A673 (cell line): ENCODE measurements at regions of chr6 and their contacts with region 1.

Region 1: DNA sequence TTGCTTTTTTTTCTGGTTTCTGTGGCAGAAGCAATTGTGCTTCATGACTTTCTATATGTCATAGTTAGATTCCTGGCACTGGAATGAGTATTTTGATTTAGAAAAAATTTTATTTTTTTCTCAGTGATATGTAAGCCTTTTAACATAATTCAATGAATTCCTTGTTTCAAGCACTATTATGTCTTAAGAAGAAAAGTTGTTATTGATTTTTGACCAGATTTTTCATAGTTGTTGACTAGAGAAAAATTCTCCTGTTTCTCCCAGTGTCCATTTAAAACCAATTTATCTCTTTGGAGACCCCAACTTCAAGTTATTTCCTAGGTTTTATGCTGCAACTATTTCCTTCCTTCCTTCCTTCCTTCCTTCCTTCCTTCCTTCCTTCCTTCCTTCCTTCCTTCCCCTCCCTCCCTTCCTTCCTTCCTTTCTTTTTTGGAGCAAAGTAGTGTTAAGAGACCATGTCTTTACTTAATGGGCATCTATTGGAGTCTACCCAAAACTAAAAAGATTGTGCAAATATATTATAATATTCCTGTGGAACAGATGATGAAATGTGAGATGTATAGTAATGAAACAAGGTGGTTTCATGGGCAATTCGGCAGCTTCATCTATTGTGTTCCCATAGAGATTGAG is 346.9 kb downstream of the RNF144B start:
- DNase-seq: peak; percentile 97
- H3K4me3 ChIP-seq: no peak overlapping the region
- H3K27ac ChIP-seq: peak overlapping the region; percentile 97
- H3K4me1 ChIP-seq: peaks cover 41% of the 10 kb centered on the region
- H3K27me3 ChIP-seq: no peaks in the 10 kb centered on the region
- CTCF ChIP-seq: no peak

Region 2: DNA sequence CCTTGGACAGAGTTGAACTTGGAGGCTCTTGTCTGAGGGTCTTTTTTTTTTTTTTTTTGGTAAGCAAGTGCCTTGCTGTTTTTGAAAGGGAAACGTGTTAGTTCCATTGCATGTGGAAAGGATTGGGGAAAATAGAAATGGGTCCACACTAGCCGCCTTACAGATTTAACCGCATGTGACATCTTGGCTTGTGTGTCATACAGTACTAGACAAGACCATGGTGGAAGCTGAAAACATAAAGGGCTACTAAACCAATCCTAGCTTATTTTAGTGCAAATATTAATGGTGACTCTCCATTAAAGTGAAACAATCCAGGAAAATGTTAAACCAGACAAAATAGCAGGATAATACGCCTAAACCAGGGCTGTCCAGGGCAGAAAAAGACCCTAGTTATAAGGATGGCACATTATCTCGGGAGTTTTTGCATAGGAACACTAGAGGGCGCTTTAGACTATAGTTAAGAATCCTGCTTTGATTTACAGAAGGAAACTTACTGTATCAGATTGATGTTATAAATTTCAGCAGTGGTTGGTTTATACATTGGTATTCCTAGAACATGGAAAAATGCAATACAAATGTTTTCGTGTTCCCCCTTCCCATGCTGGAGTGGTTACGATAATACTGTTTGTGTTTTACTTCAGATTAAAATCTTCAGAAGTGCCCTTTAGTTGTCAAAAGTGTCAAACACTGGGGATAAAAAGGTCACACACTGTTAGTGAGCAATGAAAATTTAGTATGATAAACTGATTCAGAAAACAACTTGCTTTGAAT is 409.9 kb before region 1 on chr6:
- CTCF ChIA-PET with region 1: interaction called, 3 read pairs
- POLR2A ChIA-PET with region 1: no interaction called
- intact Hi-C with region 1: loop called (anchors 10 kb)
- DNase-seq: peak; percentile 77
- H3K4me3 ChIP-seq: no peak overlapping the region
- H3K27ac ChIP-seq: no peak overlapping the region
- H3K4me1 ChIP-seq: peaks cover 8% of the 10 kb centered on the region
- H3K27me3 ChIP-seq: no peaks in the 10 kb centered on the region
- CTCF ChIP-seq: peak; percentile 81

Region 3: DNA sequence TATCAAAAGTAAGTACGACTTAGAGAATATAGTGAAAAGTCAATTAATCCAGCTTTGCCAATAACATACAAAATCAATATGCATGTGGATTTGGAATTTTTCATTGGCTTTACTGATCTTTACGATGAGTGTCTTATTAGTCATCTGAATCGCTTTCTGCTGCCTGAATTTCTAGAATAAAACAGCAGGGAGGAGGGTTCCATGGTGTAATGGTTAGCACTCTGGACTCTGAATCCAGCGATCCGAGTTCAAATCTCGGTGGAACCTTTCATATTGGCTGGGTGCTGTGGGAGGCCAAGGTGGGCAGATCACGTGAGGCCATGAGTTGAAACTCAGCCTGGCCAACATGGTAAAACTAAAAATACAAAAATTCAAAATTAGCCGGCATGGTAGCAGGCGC is 101.9 kb after region 1 on chr6:
- CTCF ChIA-PET with region 1: no interaction called
- POLR2A ChIA-PET with region 1: no interaction called
- intact Hi-C with region 1: no loop called
- DNase-seq: no peak
- H3K4me3 ChIP-seq: no peak overlapping the region
- H3K27ac ChIP-seq: no peak overlapping the region
- H3K4me1 ChIP-seq: no peaks in the 10 kb centered on the region
- H3K27me3 ChIP-seq: no peaks in the 10 kb centered on the region
- CTCF ChIP-seq: no peak

Region 4: DNA sequence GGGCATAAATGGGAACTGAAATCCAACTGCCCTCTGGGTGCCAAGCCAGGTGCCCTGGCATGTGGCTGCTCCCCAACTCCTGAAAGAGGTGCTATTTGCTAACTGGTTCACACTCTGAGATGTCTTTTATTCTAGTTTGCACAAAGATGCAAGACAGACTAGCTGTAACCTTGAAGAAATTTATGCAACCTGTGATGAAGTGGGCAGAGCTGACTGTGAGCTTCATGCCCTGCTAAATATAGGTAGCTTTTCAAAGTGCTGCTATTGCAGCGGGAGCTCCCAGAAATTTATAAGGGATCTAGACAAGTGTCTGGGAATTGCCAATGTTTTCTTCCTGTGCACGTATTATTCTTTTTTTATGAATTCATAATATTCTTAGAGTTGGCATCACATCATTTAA is 170.6 kb after region 1 on chr6:
- CTCF ChIA-PET with region 1: no interaction called
- POLR2A ChIA-PET with region 1: no interaction called
- intact Hi-C with region 1: no loop called
- DNase-seq: no peak
- H3K4me3 ChIP-seq: no peak overlapping the region
- H3K27ac ChIP-seq: no peak overlapping the region
- H3K4me1 ChIP-seq: no peaks in the 10 kb centered on the region
- H3K27me3 ChIP-seq: no peaks in the 10 kb centered on the region
- CTCF ChIP-seq: no peak

Region 5: DNA sequence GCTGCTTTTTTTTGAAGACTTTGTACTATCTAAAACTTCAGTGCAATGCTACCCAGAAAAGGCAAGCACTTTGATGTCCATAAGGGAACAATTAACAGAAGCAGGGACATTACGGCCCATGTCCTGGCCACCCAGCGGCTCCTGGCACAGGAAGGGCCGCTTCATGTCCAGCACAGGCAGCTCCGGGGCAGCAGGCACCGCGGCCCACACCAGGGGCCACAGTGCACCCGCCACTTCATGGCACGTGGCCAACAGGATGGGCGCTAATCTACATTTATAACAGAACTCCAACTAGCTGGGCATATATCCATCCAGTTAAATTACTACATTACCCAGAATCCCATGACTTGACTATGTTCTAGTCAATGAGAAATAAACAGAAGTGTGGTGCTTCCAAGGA is 904.9 kb after region 1 on chr6:
- CTCF ChIA-PET with region 1: no interaction called
- POLR2A ChIA-PET with region 1: no interaction called
- intact Hi-C with region 1: loop called (anchors 5 kb)
- DNase-seq: no peak
- H3K4me3 ChIP-seq: no peak overlapping the region
- H3K27ac ChIP-seq: no peak overlapping the region
- H3K4me1 ChIP-seq: peaks cover 34% of the 10 kb centered on the region
- H3K27me3 ChIP-seq: no peaks in the 10 kb centered on the region
- CTCF ChIP-seq: no peak

Region 6: DNA sequence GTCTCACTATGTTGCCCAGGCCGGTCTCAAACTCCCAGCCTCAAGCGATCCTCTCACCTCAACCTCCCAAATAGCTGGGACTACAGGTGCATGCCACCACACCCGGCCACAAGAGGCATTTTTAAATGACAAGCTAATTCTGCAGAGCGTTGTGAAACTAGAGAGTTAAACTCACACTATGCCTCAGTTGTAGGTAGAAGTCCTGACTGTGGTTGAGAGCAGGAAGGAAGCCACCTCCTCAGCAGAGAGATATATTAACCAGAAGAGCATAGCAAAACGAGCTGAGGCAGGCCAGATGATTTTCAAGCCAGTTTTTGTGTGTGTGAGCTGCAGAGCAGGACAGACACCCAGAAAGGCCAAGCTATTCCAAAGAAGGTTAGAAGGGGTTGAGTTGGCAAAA is 1327.9 kb after region 1 on chr6:
- CTCF ChIA-PET with region 1: no interaction called
- POLR2A ChIA-PET with region 1: no interaction called
- intact Hi-C with region 1: loop called (anchors 10 kb)
- DNase-seq: no peak
- H3K4me3 ChIP-seq: no peak overlapping the region
- H3K27ac ChIP-seq: no peak overlapping the region
- H3K4me1 ChIP-seq: no peaks in the 10 kb centered on the region
- H3K27me3 ChIP-seq: no peaks in the 10 kb centered on the region
- CTCF ChIP-seq: no peak